ENCODE measurements at regions of chr16 and their contacts with region 1.

Region 1: GRCh38 chr16:10971560-10971961 is 27.2 kb downstream of the CLEC16A start:
- DNase-seq: peak; percentile 70 to 78 (median 71)
- H3K4me3 ChIP-seq: no peak overlapping the region
- H3K27ac ChIP-seq: no peak overlapping the region
- H3K4me1 ChIP-seq: peaks cover 3 to 28% (median 19%) of the 10 kb centered on the region in 4 experiments
- H3K27me3 ChIP-seq: no peaks in the 10 kb centered on the region

Region 2: GRCh38 chr16:10981697-10982216 is 10.2 kb after region 1 on chr16:
- CTCF ChIA-PET with region 1: interaction called, 16 read pairs
- POLR2A ChIA-PET with region 1: no interaction called
- DNase-seq: peak in 2 of 3 donors; percentile 50 to 51
- H3K4me3 ChIP-seq: no peak overlapping the region
- H3K27ac ChIP-seq: no peak overlapping the region
- H3K4me1 ChIP-seq: peaks cover 0 to 3% (median 0%) of the 10 kb centered on the region in 4 experiments
- H3K27me3 ChIP-seq: no peaks in the 10 kb centered on the region

Measured in common myeloid progenitor, CD34-positive (primary cell).